ENCODE measurements at regions of chr12 and their contacts with region 1.

Region 1: DNA sequence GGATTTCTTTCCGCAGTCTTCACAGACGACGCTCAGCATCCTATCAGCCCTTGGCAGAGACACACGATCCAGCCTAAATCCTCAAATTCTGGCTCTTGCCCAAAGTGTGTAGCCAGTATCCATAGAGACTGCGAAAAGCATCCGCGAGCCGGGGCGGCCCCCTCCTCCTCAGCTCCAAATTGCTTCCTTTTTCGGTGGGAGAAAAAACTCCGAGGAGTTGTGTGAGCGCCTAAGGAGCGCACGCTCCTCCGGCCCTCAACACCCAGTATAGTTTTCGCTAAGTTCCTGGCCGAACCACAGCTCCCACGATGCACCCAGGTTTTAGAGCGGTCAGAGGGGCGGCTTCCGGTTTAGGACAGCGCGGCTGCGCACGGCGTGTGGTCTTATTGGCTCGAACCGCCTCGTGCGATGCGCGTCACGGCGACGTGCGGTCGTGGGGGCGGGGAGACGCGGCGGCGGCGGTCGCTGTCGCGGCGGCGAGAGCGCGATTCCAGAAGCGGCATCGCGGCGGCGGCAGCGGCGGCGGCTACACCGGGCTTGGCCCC is at the start of gene ADIPOR2:
- DNase-seq: peak; percentile 87 to 99 (median 92)

Region 2: DNA sequence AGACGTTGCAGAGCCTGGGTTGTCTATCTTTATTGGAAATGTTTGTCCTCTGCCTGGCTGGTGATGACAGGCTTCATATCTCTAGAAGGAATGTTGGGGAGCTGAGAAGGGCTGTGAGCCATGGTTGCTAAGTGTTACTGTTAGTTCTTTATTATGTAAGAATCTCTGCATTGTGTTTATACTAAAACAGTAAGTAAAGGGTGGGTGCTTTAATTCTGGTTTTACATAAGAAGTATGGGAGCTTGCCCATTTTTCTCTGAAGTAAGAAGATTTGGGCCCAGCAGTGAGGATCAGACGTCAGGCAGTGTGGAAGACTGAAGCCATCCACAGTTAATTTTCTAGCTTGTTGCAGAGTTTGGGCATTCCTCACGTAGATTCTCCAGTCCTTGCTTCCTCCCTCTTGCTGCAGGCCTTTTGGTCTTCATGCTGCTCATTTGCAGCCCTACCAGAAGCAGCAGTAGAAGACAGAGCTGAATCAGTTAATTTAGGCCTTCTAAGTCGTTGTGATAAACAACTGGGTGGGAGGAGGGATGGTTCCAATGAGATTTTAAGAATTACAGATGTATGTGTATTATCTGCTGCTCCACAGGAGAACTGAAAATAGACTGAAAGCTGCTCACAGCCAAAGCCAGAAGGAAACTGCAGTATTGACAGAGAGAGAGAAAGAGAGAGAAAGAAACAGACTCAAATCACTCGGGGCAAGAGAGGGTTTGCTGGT is 40.2 kb before region 1 on chr12:
- intact Hi-C with region 1: loop called (anchors 5 kb)
- DNase-seq: no peak

Region 3: GRCh38 chr12:1776170-1776948 is 85.7 kb after region 1 on chr12:
- intact Hi-C with region 1: loop called (anchors 10 kb)
- DNase-seq: no peak